ENCODE measurements at regions of chr12 and their contacts with region 1.

Region 1: GRCh38 chr12:42129595-42130204 is 15.0 kb downstream of the GXYLT1 start:
- DNase-seq: no peak
- ATAC-seq: peak; percentile 82

Region 2: GRCh38 chr12:42056130-42056529 is 73.6 kb before region 1 on chr12:
- intact Hi-C with region 1: no loop called
- DNase-seq: no peak
- ATAC-seq: no peak

Region 3: DNA sequence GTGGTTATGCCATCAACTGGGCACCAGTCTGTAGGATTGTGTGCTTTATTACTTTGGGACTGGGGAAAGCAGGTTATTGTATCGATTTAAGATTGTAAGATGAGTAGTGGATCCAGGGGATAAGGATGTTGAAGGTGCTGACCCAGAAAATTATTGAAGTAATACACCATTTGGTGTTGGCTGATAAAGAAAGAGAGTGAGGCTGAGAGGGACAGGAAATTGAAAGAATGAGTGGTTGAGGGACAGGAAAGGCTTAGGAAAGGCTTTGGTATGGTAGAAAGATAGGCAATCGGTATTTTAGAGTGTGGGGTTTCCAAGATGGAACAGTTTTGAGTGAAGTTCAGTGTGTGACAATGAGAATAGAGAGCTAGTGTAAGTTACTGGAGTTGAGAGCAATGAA is 208.6 kb after region 1 on chr12:
- intact Hi-C with region 1: loop called (anchors 2 kb)
- DNase-seq: no peak
- ATAC-seq: no peak

Region 4: DNA sequence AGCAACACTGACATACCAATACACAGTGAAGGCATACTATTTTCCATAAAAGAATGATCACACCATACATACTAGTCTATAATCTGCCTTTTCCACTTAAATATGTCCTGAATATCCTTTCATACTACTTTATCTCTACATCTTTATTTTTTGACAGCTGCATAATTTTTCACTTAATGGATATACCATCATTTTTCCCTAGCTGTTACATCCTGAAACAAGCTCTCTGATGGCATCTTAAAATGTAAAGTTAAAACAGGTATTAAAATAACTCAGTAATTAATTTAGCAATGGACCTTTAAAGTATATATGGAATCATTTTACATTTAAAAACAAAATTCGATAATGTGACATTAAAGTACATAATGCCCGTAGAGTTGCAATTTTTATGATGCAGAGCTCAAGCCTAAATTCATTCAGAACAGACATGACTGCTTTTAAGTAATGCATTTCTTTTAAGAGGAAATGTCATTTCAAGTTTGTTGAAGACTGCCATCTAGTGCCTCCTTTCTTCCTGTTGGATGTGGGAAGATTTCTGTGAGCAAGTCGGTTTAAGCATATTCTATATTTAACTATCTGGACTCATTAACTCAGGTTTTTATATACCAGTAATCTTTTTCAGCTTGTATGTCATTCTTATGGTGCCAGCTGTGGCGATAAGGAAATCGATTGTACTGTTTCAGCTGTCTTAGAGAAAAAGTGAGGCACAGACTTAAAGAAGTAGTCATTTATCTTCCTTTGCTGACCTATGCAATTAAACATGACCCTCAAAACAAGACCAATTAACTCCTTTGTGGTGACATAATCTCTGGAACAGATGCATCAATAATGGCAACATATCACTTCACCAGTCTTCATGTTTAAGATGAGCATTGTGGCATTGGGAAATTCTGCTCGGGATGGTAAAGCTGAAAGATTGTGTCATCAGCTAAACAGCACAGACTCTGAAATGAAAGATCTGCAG is 439.5 kb after region 1 on chr12:
- intact Hi-C with region 1: loop called (anchors 10 kb)
- DNase-seq: no peak
- ATAC-seq: peak; percentile 67

Measured in left ventricle myocardium superior (tissue), 1 donor.